A549 (cell line): ENCODE measurements at regions of chr1 and their contacts with region 1.

Region 1: GRCh38 chr1:224894918-224895317 is 34.6 kb upstream of the DNAH14 start:
- DNase-seq: peak; percentile 9 to 35
- ATAC-seq: peak in 1 of 2 experiments; percentile 78; a peak in 3 of 6 replicates
- H3K4me3 ChIP-seq: no peak overlapping the region
- H3K27ac ChIP-seq: no peak overlapping the region
- H3K4me1 ChIP-seq: no peaks in the 10 kb centered on the region
- CTCF ChIP-seq: peak; percentile 35; the same call in 1 of the 3 replicates
- EP300 ChIP-seq: no peak
- POLR2A ChIP-seq: no peak
- RAD21 ChIP-seq: peak; percentile 33 to 40; a peak in 4 of 5 replicates

Region 2: DNA sequence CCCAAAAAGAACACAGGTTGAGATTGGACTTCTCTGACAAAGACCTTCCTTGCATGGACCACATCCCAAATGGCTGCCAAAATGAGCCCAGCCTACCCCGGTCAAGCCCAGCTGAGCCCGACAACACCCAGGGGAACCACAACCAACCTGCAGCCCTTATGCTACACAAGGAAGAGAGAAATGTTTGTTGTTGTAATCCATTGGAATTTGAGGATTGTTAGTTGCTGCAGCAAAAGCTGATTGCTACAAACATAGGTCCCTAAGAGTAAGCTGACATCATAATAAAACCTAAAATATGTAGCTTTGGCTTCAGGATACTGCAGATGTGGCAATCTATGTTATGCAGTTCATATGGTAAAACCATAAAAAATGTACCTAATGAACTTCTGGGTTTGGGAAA is 30.9 kb before region 1 on chr1:
- CTCF ChIA-PET with region 1: no interaction called
- POLR2A ChIA-PET with region 1: no interaction called
- DNase-seq: no peak
- ATAC-seq: no peak
- H3K4me3 ChIP-seq: no peak overlapping the region
- H3K27ac ChIP-seq: no peak overlapping the region
- H3K4me1 ChIP-seq: no peaks in the 10 kb centered on the region
- CTCF ChIP-seq: no peak
- EP300 ChIP-seq: no peak
- POLR2A ChIP-seq: no peak
- RAD21 ChIP-seq: no peak

Region 3: GRCh38 chr1:224884361-224884801 is 10.5 kb before region 1 on chr1:
- CTCF ChIA-PET with region 1: interaction called, 19 read pairs
- POLR2A ChIA-PET with region 1: no interaction called
- DNase-seq: peak in 1 of 2 experiments; percentile 28
- ATAC-seq: peak; percentile 24 to 51; a peak in 2 of 6 replicates
- H3K4me3 ChIP-seq: no peak overlapping the region
- H3K27ac ChIP-seq: peak overlapping the region in 1 of 2 experiments; percentile 7; a peak in 1 of 6 replicates
- H3K4me1 ChIP-seq: peaks cover 32% of the 10 kb centered on the region
- CTCF ChIP-seq: no peak
- EP300 ChIP-seq: peak; percentile 17 to 52; a peak in 1 of 5 replicates
- POLR2A ChIP-seq: no peak
- RAD21 ChIP-seq: no peak

Region 4: GRCh38 chr1:224922404-224923164 is 27.7 kb after region 1 on chr1:
- CTCF ChIA-PET with region 1: interaction called, 20 read pairs
- POLR2A ChIA-PET with region 1: no interaction called
- DNase-seq: peak; percentile 48 to 57
- ATAC-seq: peak; percentile 92 to 93
- H3K4me3 ChIP-seq: no peak overlapping the region
- H3K27ac ChIP-seq: no peak overlapping the region
- H3K4me1 ChIP-seq: no peaks in the 10 kb centered on the region
- CTCF ChIP-seq: peak; percentile 78
- EP300 ChIP-seq: no peak
- POLR2A ChIP-seq: no peak
- RAD21 ChIP-seq: peak; percentile 79 to 86

Region 5: DNA sequence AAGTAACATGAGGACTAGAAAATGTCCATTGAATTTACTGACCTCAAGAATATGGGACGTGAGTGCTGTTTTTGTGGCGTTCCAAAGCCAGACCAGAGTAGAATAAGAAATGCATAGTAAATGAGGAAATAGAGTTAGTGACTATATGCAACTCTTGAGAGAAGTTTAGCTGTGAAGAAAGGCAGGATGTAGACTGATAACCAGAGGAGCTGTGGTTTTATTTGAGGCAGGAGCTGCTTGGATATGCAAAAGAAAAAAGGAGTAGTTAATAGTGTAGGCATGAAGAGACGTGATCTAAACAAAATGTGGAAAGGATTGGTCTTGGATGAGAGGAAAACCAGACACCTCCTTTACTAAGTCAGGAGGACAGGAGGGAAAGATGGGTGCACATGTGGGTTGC is 62.8 kb after region 1 on chr1:
- CTCF ChIA-PET with region 1: no interaction called
- POLR2A ChIA-PET with region 1: no interaction called
- DNase-seq: no peak
- ATAC-seq: no peak
- H3K4me3 ChIP-seq: no peak overlapping the region
- H3K27ac ChIP-seq: no peak overlapping the region
- H3K4me1 ChIP-seq: no peaks in the 10 kb centered on the region
- CTCF ChIP-seq: no peak
- EP300 ChIP-seq: no peak
- POLR2A ChIP-seq: no peak
- RAD21 ChIP-seq: no peak